ENCODE measurements at regions of chr5 and their contacts with region 1.

Region 1: GRCh38 chr5:10452768-10453331 is 11.2 kb downstream of the ROPN1L start:
- DNase-seq: no peak
- ATAC-seq: peak; percentile 80

Region 2: GRCh38 chr5:10628601-10629000 is 175.8 kb after region 1 on chr5:
- intact Hi-C with region 1: loop called (anchors 2 kb)
- DNase-seq: no peak
- ATAC-seq: no peak

Measured in left ventricle myocardium superior (tissue), 1 donor.